Heart left ventricle (tissue), 16 donors: ENCODE measurements at regions of chr10 and their contacts with region 1.

Region 1: GRCh38 chr10:119333146-119333792 is 125.9 kb downstream of the GRK5 start:
- DNase-seq: peak in 3 of 5 donors; percentile 18 to 35 (median 21)
- ATAC-seq: no peak
- H3K4me3 ChIP-seq: no peak overlapping the region
- H3K27ac ChIP-seq: peak overlapping the region in 1 of 12 donors; percentile 82
- H3K4me1 ChIP-seq: peaks cover 0 to 65% (median 20%) of the 10 kb centered on the region in 12 donors
- H3K27me3 ChIP-seq: no peaks in the 10 kb centered on the region
- CTCF ChIP-seq: no peak
- POLR2A ChIP-seq: no peak

Region 2: GRCh38 chr10:119161680-119162079 is 171.6 kb before region 1 on chr10:
- intact Hi-C with region 1: no loop called
- DNase-seq: no peak
- ATAC-seq: no peak
- H3K4me3 ChIP-seq: no peak overlapping the region
- H3K27ac ChIP-seq: no peak overlapping the region
- H3K4me1 ChIP-seq: peaks cover 0 to 28% (median 15%) of the 10 kb centered on the region in 12 donors
- H3K27me3 ChIP-seq: no peaks in the 10 kb centered on the region
- CTCF ChIP-seq: no peak
- POLR2A ChIP-seq: no peak

Region 3: DNA sequence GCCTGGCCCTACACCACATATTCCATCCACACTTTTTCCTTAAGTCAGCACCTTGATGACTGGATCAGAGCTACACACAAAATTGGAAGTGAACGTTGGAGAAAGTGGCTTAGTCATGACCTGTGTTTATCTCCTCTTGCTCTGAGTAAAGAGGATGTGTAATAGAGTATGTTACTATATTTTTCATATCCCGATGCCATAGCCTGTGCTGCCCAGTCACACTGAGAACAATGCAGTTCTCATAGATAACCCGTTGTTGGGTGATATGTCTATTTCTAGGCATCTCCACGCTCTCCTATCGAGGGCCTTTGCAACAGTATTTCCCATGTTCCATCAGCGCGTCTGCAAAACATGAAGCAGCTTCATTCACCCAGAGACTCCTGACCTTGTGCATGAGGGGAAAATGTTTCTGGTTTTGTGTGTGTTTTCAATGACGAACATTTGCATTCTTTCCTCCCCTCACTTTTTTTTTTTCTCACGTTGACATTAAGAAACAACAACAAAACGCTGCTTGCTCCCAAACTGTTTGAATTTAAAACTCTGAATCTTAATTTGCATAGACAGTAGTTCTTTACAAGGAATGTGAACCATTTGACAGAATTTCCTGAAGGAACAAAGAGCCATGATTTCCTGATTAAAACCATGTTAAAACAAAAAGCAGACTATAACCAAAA is 82.5 kb before region 1 on chr10:
- intact Hi-C with region 1: no loop called
- DNase-seq: peak in 1 of 5 donors; percentile 17
- ATAC-seq: peak in 2 of 4 donors; percentile 14
- H3K4me3 ChIP-seq: peak overlapping the region in 1 of 12 donors; percentile 0
- H3K27ac ChIP-seq: peak overlapping the region; percentile 67 to 94 (median 82)
- H3K4me1 ChIP-seq: peaks cover 18 to 85% (median 72%) of the 10 kb centered on the region in 12 donors
- H3K27me3 ChIP-seq: no peaks in the 10 kb centered on the region
- CTCF ChIP-seq: no peak
- POLR2A ChIP-seq: no peak

Region 4: DNA sequence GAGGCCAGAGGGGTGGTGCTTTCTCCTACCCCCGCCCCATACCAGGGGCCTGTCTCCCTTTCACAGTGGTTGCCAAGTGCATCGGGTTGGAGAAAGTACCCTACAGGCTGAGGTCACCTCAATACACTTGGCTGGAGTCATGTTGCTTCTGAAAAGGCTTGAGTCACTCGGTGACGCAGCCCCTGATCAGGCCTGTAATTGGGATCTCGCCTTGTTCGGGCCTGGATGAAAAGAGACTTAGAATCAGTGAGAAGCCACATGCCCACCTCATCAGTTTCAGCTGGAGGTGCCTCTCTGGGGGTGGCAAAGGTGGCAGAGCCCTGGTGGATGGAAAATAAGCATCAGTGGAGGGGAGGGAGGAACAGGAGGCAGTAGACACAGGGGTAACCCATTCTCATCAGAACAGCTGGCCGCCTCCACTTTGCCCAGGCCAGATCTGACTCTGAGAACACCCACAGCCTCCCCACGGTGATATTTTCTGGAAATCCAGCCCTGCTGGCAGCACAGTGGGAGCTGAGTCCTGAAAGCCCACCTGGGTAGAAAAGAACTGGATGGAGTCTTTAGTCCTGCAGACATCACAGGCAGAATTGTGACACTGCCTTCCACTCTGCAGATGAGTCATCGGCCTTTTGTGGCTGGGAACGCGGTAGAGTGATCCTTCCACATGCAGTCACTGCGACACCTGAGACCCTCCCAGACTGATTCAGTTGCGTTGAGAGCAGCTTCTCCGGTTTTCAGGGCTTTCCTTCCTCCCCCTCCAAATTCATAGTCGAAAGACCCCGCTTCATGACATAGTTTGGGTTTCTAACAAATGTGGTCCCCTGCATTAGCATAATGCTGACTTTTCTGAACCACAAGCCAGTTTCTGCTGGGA is 17.9 kb before region 1 on chr10:
- intact Hi-C with region 1: loop called in 2 of 10 experiments (anchors 2 kb)
- DNase-seq: peak in 3 of 5 donors; percentile 59 to 73 (median 60)
- ATAC-seq: peak in 3 of 4 donors; percentile 39 to 66 (median 40)
- H3K4me3 ChIP-seq: no peak overlapping the region
- H3K27ac ChIP-seq: peak overlapping the region in 10 of 12 donors; percentile 27 to 77 (median 56)
- H3K4me1 ChIP-seq: peaks cover 9 to 83% (median 59%) of the 10 kb centered on the region in 12 donors
- H3K27me3 ChIP-seq: no peaks in the 10 kb centered on the region
- CTCF ChIP-seq: no peak
- POLR2A ChIP-seq: no peak

Region 5: DNA sequence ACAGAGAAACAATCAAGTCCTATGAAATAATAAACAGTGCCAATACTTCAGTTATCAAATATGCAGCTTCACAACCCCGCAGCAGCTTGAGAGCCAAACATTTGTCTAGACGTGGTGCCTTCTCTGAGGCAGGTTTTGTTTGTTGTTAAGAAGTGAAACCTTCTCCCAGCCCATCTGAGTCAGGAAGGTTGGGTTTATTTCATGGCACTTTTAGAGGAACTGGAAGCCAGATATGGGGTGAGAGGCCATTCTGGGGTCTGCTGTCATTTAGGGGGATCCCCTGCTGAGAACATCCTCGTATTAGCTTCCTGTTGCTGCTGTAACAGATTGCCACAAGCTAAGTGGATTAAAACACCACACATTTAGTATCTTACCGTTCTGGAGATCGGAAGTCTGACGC is 12.3 kb before region 1 on chr10:
- intact Hi-C with region 1: loop called in 2 of 10 experiments (anchors 2 kb)
- DNase-seq: no peak
- ATAC-seq: no peak
- H3K4me3 ChIP-seq: no peak overlapping the region
- H3K27ac ChIP-seq: no peak overlapping the region
- H3K4me1 ChIP-seq: peaks cover 9 to 82% (median 46%) of the 10 kb centered on the region in 12 donors
- H3K27me3 ChIP-seq: no peaks in the 10 kb centered on the region
- CTCF ChIP-seq: no peak
- POLR2A ChIP-seq: no peak